ENCODE measurements at regions of chr2 and their contacts with region 1.

Region 1: DNA sequence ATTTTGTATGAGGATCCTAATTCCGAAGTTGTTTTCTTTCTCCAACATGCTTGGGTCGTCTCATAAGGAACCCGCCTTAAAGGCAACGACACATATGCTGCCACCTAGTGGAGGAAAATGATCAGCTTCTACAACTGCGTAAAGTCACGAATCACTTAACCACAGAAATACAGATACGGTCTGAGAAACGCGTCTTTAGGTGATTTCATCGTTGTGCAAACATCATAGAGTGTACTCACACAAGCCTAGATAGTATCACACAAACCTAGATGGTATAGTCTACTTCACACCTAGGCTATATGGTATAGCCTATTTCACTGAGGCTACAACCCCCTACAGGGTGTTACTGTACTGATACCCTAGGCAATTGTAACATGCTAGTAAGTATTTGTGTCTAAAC is 13.1 kb downstream of the GNLY start:
- DNase-seq: peak in 32 of 42 donors; percentile 32 to 90 (median 74)

Region 2: DNA sequence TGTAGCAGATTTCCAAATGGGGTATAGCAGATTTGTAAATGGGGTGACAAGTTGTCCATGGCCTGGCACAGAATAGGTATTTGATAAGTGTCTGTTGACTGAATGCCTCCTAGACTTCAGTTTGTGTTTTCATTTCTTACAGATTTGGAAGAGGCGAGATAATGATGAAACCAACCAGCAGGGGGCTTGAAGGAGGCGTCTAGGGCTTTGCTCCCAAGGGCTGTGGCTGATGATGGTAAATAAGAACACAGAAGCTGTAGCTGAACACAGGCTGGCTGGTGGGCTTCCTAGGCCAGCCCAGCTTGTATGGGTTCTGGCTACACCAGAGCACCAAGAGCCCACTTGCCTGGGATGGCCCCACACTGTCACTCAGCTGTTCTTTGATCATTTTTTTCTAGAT is 58.7 kb before region 1 on chr2:
- intact Hi-C with region 1: loop called (anchors 10 kb)
- DNase-seq: peak in 2 of 42 donors; percentile 11 to 17

Measured in head of caudate nucleus (tissue), 42 donors.